Caco-2 (cell line): ENCODE measurements at regions of chr20 and their contacts with region 1.

Region 1: DNA sequence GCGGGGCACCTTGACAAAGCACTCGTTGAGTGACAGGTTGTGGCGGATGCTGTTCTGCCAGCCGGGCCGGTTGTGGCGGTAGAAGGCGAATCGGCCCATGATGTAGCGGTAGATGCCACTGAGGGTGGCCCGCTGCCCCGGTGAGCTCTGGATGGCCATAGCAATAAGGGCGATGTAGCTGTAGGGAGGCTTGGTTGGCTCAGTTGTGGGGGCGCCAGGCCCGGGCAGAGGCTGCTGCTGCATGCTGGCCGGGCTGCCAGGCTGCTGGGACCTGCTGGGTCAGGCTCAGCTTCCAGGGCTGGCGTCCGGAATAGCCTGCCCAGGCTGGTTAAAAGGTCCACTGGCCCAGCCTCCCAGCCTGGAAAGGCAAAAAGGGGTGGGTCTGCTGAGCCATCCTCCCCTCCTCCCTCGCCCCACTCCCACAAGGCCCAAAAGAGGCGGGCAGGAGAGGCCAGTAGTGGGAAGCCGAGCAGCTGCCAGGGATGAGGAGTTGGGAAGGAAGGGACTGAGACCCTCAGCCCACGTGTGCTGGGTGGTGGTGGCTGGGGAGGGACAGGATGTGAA is at the start of gene FOXS1:
- DNase-seq: no peak
- H3K4me3 ChIP-seq: no peak within 1 kb of the TSS
- H3K4me3 Mint-ChIP-seq: no peak within 1 kb of the TSS
- H3K27ac Mint-ChIP-seq: no peak within 1 kb of the TSS
- H3K4me1 ChIP-seq: peaks cover 7% of the 10 kb centered on the region; the same call in 1 of the 2 replicates
- H3K4me1 Mint-ChIP-seq: no peaks in the 10 kb centered on the region
- H3K27me3 ChIP-seq: peaks cover 6% of the 10 kb centered on the region
- H3K27me3 Mint-ChIP-seq: peaks cover 10% of the 10 kb centered on the region
- CTCF ChIP-seq: no peak
- total RNA-seq, gene FOXS1: not detected in 2 replicates

Region 2: GRCh38 chr20:31822421-31823330 is 22.7 kb before region 1 on chr20:
- CTCF ChIA-PET with region 1: interaction called, 21 read pairs
- POLR2A ChIA-PET with region 1: no interaction called
- intact Hi-C with region 1: loop called (anchors 1 kb)
- DNase-seq: peak; percentile 80 to 92
- H3K4me3 ChIP-seq: no peak overlapping the region
- H3K4me3 Mint-ChIP-seq: no peak overlapping the region
- H3K27ac Mint-ChIP-seq: no peak overlapping the region
- H3K4me1 ChIP-seq: no peaks in the 10 kb centered on the region
- H3K4me1 Mint-ChIP-seq: no peaks in the 10 kb centered on the region
- H3K27me3 ChIP-seq: no peaks in the 10 kb centered on the region
- H3K27me3 Mint-ChIP-seq: no peaks in the 10 kb centered on the region
- CTCF ChIP-seq: peak; percentile 100

Region 3: DNA sequence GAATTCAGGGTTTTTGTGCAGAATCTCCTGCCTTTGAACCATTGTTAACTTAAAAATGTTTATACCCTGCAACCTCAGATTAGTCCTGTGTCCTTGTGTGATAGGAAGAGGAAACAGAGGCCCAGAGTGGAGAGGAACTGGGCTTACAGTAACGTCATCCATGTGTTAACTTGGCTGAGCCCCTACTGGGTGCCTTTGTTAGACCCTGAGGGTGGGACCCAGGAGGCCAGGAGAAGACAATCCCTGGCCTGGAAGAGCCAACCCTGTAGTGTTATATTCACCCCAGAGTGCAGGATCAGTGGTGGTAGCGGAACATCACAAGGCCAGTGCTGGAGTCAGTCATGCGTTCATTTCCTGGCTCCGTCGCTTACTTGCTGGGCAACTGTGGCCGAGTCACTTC is 15.7 kb before region 1 on chr20:
- CTCF ChIA-PET with region 1: interaction called, 11 read pairs
- POLR2A ChIA-PET with region 1: no interaction called
- intact Hi-C with region 1: no loop called
- DNase-seq: no peak
- H3K4me3 ChIP-seq: no peak overlapping the region
- H3K4me3 Mint-ChIP-seq: no peak overlapping the region
- H3K27ac Mint-ChIP-seq: no peak overlapping the region
- H3K4me1 ChIP-seq: no peaks in the 10 kb centered on the region
- H3K4me1 Mint-ChIP-seq: no peaks in the 10 kb centered on the region
- H3K27me3 ChIP-seq: no peaks in the 10 kb centered on the region
- H3K27me3 Mint-ChIP-seq: no peaks in the 10 kb centered on the region
- CTCF ChIP-seq: no peak

Region 4: DNA sequence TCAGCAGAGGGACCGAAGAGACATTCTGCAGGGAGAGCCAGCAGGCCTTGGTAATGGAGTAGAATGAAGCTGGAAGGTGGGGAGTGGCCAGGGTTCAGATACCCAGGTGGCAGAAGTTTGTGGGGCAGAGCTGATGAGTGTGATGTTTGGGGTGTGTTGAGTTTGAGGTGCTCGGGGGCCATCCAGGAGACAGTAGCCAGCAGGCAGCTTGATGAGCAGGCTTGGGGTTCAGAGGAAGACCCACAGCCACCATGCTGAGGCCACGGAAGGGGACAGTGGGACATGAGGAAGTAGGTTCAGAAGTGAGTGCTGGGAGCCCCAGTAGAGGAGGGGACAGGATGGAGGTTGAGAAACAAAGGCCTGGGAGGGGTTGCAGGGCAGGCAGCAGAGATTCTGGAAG is 11.1 kb after region 1 on chr20:
- CTCF ChIA-PET with region 1: interaction called, 13 read pairs
- POLR2A ChIA-PET with region 1: no interaction called
- intact Hi-C with region 1: no loop called
- DNase-seq: peak in 1 of 2 experiments; percentile 34
- H3K4me3 ChIP-seq: no peak overlapping the region
- H3K4me3 Mint-ChIP-seq: no peak overlapping the region
- H3K27ac Mint-ChIP-seq: no peak overlapping the region
- H3K4me1 ChIP-seq: peaks cover 11% of the 10 kb centered on the region
- H3K4me1 Mint-ChIP-seq: peaks cover 8% of the 10 kb centered on the region
- H3K27me3 ChIP-seq: 0 out of 2 replicates have a peak, but pooled peaks cover 1% of the 10 kb centered on the region
- H3K27me3 Mint-ChIP-seq: peaks cover 7% of the 10 kb centered on the region
- CTCF ChIP-seq: no peak

Region 5: GRCh38 chr20:31861346-31862156 is 16.2 kb after region 1 on chr20:
- CTCF ChIA-PET with region 1: interaction called, 12 read pairs
- POLR2A ChIA-PET with region 1: no interaction called
- intact Hi-C with region 1: no loop called
- DNase-seq: peak; percentile 91
- H3K4me3 ChIP-seq: peak overlapping the region; percentile 75
- H3K4me3 Mint-ChIP-seq: peak overlapping the region; percentile 78
- H3K27ac Mint-ChIP-seq: peak overlapping the region; percentile 5
- H3K4me1 ChIP-seq: peaks cover 16% of the 10 kb centered on the region
- H3K4me1 Mint-ChIP-seq: peaks cover 8% of the 10 kb centered on the region
- H3K27me3 ChIP-seq: no peaks in the 10 kb centered on the region
- H3K27me3 Mint-ChIP-seq: peaks cover 7% of the 10 kb centered on the region
- CTCF ChIP-seq: no peak